Right ventricle myocardium inferior (tissue), 1 donor: ENCODE measurements at regions of chr7 and their contacts with region 1.

Region 1: DNA sequence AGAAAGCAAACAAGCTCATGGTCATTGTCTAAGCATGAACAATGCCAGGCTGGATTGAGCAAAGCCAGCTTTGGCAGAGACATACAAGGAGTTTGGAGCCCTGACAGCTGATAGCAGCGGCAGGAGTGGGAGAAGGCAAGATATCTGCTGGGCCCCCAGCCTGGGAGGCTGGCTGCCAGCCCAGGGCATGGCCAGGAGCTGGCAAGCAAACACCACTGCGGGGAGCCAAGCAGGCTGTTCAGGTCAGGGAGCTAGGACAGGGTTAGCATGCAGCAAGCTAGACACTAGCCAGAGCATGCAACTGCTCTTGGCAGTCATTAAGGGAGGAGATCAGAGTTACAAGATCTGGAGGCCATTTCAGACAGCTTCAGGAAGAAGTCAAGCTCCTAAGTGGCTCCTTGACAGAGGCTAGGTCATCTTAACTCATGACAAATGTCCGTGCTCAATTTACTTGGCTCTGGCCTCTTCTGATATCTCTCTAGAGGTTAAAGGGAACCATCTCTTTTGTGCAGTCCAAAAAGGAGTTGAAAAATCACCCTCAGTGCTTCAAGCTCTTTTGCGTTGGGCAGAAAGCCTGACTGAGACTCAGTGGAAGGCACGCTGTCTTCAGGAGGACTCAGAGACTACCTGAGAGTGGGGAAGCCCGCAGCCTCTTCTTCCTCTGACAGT is 436.8 kb upstream of the C7orf33 start:
- DNase-seq: peak; percentile 78
- ATAC-seq: peak; percentile 98

Region 2: GRCh38 chr7:148232784-148233183 is 79.0 kb after region 1 on chr7:
- intact Hi-C with region 1: loop called (anchors 1 kb)
- DNase-seq: no peak
- ATAC-seq: peak; percentile 96